AG04450 (cell line): ENCODE measurements at regions of chr2 and their contacts with region 1.

Region 1: GRCh38 chr2:159140070-159140769 is 146.3 kb downstream of the WDSUB1 start:
- DNase-seq: peak; percentile 61
- H3K4me3 ChIP-seq: no peak overlapping the region
- H3K27ac ChIP-seq: peak overlapping the region; percentile 11
- H3K27me3 ChIP-seq: no peaks in the 10 kb centered on the region
- CTCF ChIP-seq: no peak

Region 2: DNA sequence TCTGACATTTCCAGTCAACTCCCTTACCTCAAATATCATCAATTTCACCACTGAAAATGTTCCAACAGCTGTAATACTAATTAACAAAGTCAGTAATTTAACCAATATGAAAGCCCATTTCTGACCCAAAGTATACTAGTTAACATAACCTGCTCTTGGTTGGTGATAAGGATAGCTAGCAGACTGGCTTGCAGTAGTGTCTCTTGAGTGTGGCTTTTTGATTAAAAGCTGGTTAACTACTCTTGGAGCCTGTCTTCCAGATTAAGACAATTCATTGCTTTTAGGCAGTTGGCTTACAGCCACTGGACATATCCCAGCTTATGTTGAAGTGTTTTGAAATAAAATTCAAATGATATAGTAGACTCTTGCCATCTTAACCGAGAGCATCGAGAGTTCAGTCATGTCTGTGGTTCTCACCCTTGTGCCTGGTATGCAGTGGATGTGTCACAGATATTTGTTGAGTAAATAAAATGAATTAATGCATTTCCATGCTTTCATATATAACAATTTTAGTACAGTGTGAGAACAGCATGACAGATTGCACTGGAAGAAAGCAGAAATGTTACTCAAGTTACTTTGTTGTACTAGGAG is 13.7 kb before region 1 on chr2:
- CTCF ChIA-PET with region 1: interaction called, 7 read pairs
- POLR2A ChIA-PET with region 1: interaction called, 10 read pairs
- DNase-seq: no peak
- H3K4me3 ChIP-seq: no peak overlapping the region
- H3K27ac ChIP-seq: no peak overlapping the region
- H3K27me3 ChIP-seq: no peaks in the 10 kb centered on the region
- CTCF ChIP-seq: no peak

Region 3: GRCh38 chr2:159150280-159150746 is 10.1 kb after region 1 on chr2:
- CTCF ChIA-PET with region 1: interaction called, 18 read pairs
- POLR2A ChIA-PET with region 1: interaction called, 6 read pairs
- DNase-seq: no peak
- H3K4me3 ChIP-seq: no peak overlapping the region
- H3K27ac ChIP-seq: no peak overlapping the region
- H3K27me3 ChIP-seq: no peaks in the 10 kb centered on the region
- CTCF ChIP-seq: no peak